PC-3 (cell line): ENCODE measurements at regions of chr11 and their contacts with region 1.

Region 1: DNA sequence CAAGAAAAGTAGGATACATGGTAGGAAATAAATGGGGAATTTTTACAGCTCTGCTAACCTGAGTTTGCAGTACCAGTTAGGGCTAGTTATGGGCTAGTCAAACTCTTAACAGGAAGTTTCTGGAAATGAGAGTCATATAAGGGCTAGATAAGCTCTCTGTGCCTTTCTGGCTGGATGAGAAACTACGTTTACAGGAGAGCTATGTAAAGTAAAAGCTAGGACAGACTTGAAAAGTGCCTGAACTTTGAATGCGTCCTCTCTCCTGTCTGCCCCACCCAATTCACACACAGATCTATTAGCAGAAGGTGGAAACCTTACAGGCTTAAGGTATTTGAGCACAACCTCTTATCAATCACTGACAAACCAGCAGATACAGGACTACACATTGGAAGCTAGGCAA is 167.1 kb downstream of the SNX19 start:
- DNase-seq: no peak
- ATAC-seq: no peak
- H3K4me3 ChIP-seq: no peak overlapping the region
- H3K27ac ChIP-seq: no peak overlapping the region
- H3K4me1 ChIP-seq: peaks cover 19% of the 10 kb centered on the region
- H3K27me3 ChIP-seq: no peaks in the 10 kb centered on the region
- CTCF ChIP-seq: no peak

Region 2: DNA sequence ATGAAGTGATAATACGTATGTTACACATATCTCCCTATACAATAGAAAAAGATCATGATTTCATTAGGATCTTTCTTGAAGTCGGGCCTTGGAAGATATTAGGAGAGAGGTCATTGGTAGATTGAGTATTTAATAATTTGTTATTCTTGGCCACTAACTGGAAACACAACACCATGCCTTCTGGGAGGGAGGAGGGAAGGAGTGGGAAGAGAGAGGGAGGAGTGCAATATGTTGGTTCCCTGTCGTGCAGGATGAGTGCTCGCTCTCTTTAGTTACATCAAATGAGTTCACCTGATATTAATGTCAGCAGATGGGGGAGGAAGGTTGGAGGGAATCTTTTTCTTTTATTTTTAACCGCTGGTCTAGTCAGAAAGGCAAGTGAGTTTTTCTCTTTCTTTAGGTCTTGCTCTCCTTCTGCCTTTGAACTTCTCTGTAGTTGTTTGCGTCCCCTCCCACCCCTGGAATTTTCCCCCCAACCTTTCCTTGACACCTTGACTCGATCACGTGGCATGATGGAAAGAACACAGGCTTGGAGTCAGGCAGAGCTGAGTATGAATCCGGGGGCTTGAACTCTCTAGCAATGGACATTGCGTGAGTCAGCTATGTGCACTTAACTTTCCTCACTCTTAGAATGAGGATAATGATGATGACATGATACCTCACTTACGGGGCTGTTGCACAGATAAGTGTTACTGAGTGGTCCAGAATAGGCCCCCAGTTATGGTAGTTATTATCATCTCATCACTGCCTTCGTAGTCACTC is 294.5 kb before region 1 on chr11:
- CTCF ChIA-PET with region 1: no interaction called
- POLR2A ChIA-PET with region 1: interaction called, 47 read pairs
- intact Hi-C with region 1: no loop called
- DNase-seq: no peak
- ATAC-seq: no peak
- H3K4me3 ChIP-seq: no peak overlapping the region
- H3K27ac ChIP-seq: no peak overlapping the region
- H3K4me1 ChIP-seq: peaks cover 37% of the 10 kb centered on the region
- H3K27me3 ChIP-seq: no peaks in the 10 kb centered on the region
- CTCF ChIP-seq: no peak

Region 3: DNA sequence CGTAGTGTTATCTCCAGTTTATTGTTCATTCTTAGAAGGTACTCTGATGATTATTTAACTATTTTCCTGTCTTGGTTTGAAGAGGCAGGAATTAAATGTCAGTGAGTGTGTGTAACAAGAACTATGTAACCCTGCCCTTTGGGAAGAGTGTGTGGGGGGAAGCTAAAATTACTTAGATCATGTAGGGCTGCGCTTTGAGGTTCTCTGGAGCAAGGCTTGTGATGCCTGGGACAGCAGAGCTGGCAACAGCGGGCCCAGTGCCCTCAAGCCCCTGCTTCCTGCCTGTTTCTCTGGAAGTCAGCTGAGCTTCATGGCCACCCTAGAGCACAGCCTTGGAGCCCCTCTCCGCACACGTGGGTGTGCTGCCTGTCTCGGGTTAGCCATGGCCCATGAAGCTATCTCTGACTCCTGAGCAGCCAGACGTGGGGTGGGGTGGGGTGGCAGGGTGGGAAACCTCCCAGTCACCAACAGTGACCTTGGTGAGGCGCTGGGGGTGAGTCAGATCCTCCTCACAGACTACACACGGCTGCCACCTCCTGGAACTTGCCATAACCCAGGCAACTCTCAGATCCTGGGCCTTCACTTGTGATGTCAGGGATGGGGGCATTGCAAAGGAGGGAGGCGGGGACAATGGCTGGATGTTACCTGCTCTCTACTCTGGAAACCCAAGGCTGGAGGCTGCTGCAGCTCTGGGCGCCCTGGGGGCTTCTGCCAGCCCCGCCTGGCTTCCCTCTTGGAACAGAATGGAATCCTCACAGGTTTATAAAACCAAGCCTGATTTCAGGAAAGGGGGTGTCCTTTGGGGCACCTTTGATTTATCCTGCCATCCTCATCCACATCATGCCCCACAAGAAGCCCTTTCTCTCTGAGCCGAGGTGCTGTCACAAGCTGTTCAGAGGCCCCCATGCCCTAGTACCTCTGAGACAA is 78.5 kb after region 1 on chr11:
- CTCF ChIA-PET with region 1: no interaction called
- POLR2A ChIA-PET with region 1: no interaction called
- intact Hi-C with region 1: no loop called
- DNase-seq: peak; percentile 93
- ATAC-seq: peak; percentile 95
- H3K4me3 ChIP-seq: no peak overlapping the region
- H3K27ac ChIP-seq: peak overlapping the region; percentile 58
- H3K4me1 ChIP-seq: peaks cover 23% of the 10 kb centered on the region
- H3K27me3 ChIP-seq: no peaks in the 10 kb centered on the region
- CTCF ChIP-seq: peak; percentile 89